Dorsolateral prefrontal cortex (tissue), 120 donors: ENCODE measurements at regions of chr1 and their contacts with region 1.

Region 1: GRCh38 chr1:30085811-30086770 is 637.3 kb downstream of the MATN1 start:
- DNase-seq: peak in 8 of 10 donors; percentile 18 to 59 (median 51)
- H3K4me3 ChIP-seq: peak overlapping the region in 31 of 59 donors; percentile 6 to 53 (median 27)
- H3K27ac ChIP-seq: peak overlapping the region in 2 of 59 donors; percentile 28 to 51
- H3K27me3 ChIP-seq: peaks cover 0 to 21% (median 0%) of the 10 kb centered on the region in 45 donors
- CTCF ChIP-seq: peak in 54 of 56 donors; percentile 25 to 73 (median 54)

Region 2: GRCh38 chr1:29912425-29912824 is 173.7 kb before region 1 on chr1:
- intact Hi-C with region 1: loop called in 1 of 2 experiments (anchors 10 kb)
- DNase-seq: peak in 1 of 10 donors; percentile 48
- H3K4me3 ChIP-seq: no peak overlapping the region
- H3K27ac ChIP-seq: no peak overlapping the region
- H3K27me3 ChIP-seq: peaks cover 0 to 12% (median 0%) of the 10 kb centered on the region in 45 donors
- CTCF ChIP-seq: peak in 31 of 56 donors; percentile 9 to 49 (median 25)

Region 3: DNA sequence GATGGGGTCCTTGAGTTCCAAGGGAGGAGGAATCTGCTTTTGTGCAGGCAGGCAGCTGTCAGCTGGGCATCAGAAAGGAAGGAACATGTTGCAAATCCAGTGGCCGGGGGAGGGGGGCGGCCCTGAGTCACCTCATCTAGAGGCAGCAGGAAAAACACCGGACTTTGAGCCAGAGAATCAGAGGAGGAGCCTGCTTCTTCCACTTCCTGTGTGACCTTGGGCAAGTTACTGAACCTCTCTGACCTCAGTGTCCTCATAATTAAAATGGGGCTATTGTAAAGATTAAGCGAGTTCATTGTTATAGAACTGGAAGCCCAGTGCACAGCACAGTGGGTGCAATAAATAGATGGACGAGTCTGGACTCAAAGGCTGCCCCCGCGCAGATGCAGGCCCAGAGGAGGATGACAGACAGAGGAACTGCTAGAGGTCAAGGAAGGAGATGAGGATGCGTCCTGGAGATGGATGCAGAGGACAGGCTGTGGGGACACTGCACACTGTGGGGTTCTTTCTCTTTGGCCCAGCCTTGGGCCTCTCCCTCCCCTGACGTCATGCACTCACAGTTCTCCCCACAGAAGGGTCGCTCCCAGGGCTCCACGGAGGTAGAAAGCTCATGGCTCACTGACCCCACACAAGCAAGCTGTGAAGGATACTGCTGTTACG is 77.0 kb before region 1 on chr1:
- intact Hi-C with region 1: no loop called
- DNase-seq: no peak
- H3K4me3 ChIP-seq: no peak overlapping the region
- H3K27ac ChIP-seq: no peak overlapping the region
- H3K27me3 ChIP-seq: peaks cover 0 to 5% (median 0%) of the 10 kb centered on the region in 45 donors
- CTCF ChIP-seq: no peak

Region 4: GRCh38 chr1:30191154-30191702 is 105.1 kb after region 1 on chr1:
- intact Hi-C with region 1: no loop called
- DNase-seq: no peak
- H3K4me3 ChIP-seq: no peak overlapping the region
- H3K27ac ChIP-seq: no peak overlapping the region
- H3K27me3 ChIP-seq: peaks cover 0 to 43% (median 3%) of the 10 kb centered on the region in 45 donors
- CTCF ChIP-seq: no peak